ENCODE measurements at regions of chr6 and their contacts with region 1.

Region 1: DNA sequence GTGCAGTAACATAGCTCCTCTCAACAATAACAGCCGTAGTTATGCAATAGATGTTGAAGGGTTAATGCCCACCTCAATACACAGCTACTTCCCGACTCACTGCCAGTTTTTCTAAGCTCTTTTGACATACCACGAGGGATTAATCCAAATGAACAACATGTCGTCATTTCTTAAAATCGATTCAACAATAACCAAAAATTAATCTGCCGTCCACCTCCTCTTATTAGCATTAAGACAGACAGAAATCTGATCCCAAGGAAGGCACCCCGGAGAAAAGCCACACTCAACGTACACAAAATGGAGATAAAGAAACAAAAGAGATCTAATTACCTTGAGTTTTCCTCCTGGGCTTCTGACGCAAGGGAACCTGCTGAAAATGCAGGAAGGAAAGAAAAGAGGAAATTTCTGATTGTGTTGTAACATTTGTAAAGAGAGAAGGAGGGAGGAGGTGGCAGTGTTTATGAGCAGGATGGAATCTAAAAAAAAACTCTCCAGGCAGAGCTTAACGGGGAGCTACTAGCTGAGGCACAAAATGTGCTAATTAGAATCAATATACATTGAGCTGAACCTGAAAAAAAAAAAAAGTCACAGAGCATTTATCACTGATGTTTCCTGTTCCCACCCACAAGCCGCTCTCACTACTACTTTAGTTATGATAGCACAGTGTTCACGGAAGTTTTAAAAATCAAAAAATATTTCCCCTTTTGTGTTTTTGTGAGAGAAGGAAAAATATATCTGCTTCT is 109.3 kb downstream of the IPCEF1 start:
- DNase-seq: no peak
- ATAC-seq: peak; percentile 59
- H3K4me3 ChIP-seq: peak overlapping the region; percentile 76
- H3K27ac ChIP-seq: peak overlapping the region; percentile 86
- H3K4me1 ChIP-seq: peaks cover 26% of the 10 kb centered on the region
- H3K27me3 ChIP-seq: no peaks in the 10 kb centered on the region
- CTCF ChIP-seq: no peak
- EP300 ChIP-seq: peak; percentile 60 to 73
- POLR2A ChIP-seq: no peak
- RAD21 ChIP-seq: no peak

Region 2: DNA sequence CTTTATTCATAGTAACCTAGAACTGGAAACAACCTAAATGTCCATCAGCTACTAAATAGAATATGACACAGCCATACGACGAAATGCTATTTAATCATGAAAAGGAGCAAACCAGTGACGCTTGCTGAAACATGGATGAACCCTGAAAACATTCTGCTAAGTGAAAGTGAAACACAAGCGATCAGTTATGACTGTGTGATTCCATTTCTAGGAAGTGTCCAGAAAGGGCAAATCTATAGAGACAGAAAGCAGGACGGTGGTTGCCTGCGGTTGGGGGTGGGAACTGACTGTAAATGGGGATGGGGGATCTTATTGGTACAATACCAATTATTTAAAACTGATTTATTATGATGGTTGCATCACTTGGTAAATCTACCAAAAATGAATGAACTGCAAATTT is 17.5 kb before region 1 on chr6:
- CTCF ChIA-PET with region 1: interaction called, 17 read pairs
- POLR2A ChIA-PET with region 1: interaction called, 17 read pairs
- RAD21 ChIA-PET with region 1: interaction called, 51 read pairs
- SMC1A ChIA-PET with region 1: interaction called, 152 read pairs
- in situ Hi-C with region 1: no loop called
- intact Hi-C with region 1: loop called (anchors 1 kb)
- DNase-seq: no peak
- ATAC-seq: peak; percentile 82
- H3K4me3 ChIP-seq: 0 out of 2 replicates have a peak overlapping the region, but pooled peaks have one; percentile 4
- H3K27ac ChIP-seq: peak overlapping the region; percentile 35; the same call in 1 of the 2 replicates
- H3K4me1 ChIP-seq: peaks cover 9% of the 10 kb centered on the region
- H3K27me3 ChIP-seq: no peaks in the 10 kb centered on the region
- CTCF ChIP-seq: no peak
- EP300 ChIP-seq: peak in 1 of 2 experiments; percentile 63; a peak in 1 of 4 replicates
- POLR2A ChIP-seq: no peak
- RAD21 ChIP-seq: no peak

Region 3: GRCh38 chr6:154258064-154258757 is 10.9 kb after region 1 on chr6:
- CTCF ChIA-PET with region 1: interaction called, 13 read pairs
- POLR2A ChIA-PET with region 1: interaction called, 17 read pairs
- RAD21 ChIA-PET with region 1: interaction called, 30 read pairs
- SMC1A ChIA-PET with region 1: interaction called, 86 read pairs
- in situ Hi-C with region 1: no loop called
- intact Hi-C with region 1: no loop called
- DNase-seq: no peak
- ATAC-seq: peak; percentile 77
- H3K4me3 ChIP-seq: no peak overlapping the region
- H3K27ac ChIP-seq: peak overlapping the region; percentile 61
- H3K4me1 ChIP-seq: peaks cover 41% of the 10 kb centered on the region
- H3K27me3 ChIP-seq: no peaks in the 10 kb centered on the region
- CTCF ChIP-seq: no peak
- EP300 ChIP-seq: peak in 1 of 2 experiments; percentile 79; a peak in 3 of 4 replicates
- POLR2A ChIP-seq: no peak
- RAD21 ChIP-seq: no peak

Region 4: DNA sequence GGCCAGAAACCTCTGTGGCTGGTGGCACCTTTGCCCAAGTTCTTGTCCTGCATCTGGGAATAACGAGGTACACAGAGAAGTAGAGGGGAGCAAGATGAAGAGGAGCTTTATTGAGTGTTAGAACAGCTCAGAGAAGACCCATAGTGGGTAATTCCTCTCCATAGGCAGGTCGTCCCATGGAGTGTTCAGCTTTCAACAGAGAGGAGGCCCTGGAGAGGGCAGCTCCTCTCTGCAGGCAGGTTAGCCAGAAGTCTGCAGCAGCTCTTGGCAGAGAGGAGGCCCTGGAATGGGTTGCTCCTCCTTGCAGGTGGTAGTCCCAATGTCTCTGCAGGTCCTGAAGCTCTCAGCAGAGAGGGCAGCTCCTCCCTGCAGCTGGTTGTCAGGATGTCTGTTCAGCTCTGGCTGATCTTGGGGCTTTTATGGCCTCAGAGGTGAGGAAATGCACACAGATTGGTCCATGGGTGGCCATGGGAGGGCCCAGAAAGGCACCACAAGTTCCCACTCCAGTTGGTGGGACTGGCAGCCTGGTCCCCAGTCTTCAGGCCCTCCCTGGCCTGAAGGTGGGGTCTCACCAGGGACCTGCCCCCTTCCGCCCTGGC is 20.3 kb after region 1 on chr6:
- CTCF ChIA-PET with region 1: interaction called, 90 read pairs
- POLR2A ChIA-PET with region 1: interaction called, 4 read pairs
- RAD21 ChIA-PET with region 1: interaction called, 15 read pairs
- SMC1A ChIA-PET with region 1: interaction called, 86 read pairs
- in situ Hi-C with region 1: no loop called
- intact Hi-C with region 1: no loop called
- DNase-seq: no peak
- ATAC-seq: peak; percentile 47
- H3K4me3 ChIP-seq: no peak overlapping the region
- H3K27ac ChIP-seq: no peak overlapping the region
- H3K4me1 ChIP-seq: no peaks in the 10 kb centered on the region
- H3K27me3 ChIP-seq: no peaks in the 10 kb centered on the region
- CTCF ChIP-seq: no peak
- EP300 ChIP-seq: no peak
- POLR2A ChIP-seq: no peak
- RAD21 ChIP-seq: no peak

Region 5: GRCh38 chr6:154352898-154353585 is 105.8 kb after region 1 on chr6:
- CTCF ChIA-PET with region 1: no interaction called
- POLR2A ChIA-PET with region 1: no interaction called
- RAD21 ChIA-PET with region 1: interaction called, 4 read pairs
- SMC1A ChIA-PET with region 1: interaction called, 5 read pairs
- in situ Hi-C with region 1: no loop called
- intact Hi-C with region 1: loop called (anchors 5 kb)
- DNase-seq: peak; percentile 84
- ATAC-seq: peak; percentile 77
- H3K4me3 ChIP-seq: no peak overlapping the region; the same call in 1 of the 2 replicates
- H3K27ac ChIP-seq: no peak overlapping the region
- H3K4me1 ChIP-seq: peaks cover 33% of the 10 kb centered on the region
- H3K27me3 ChIP-seq: no peaks in the 10 kb centered on the region
- CTCF ChIP-seq: no peak
- EP300 ChIP-seq: peak; percentile 87 to 92
- POLR2A ChIP-seq: no peak
- RAD21 ChIP-seq: 0 out of 2 replicates have a peak, but pooled peaks have one; percentile 4

Region 6: GRCh38 chr6:154606457-154606856 is 359.2 kb after region 1 on chr6:
- CTCF ChIA-PET with region 1: no interaction called
- POLR2A ChIA-PET with region 1: no interaction called
- RAD21 ChIA-PET with region 1: interaction called, 3 read pairs
- SMC1A ChIA-PET with region 1: interaction called, 13 read pairs
- in situ Hi-C with region 1: no loop called
- intact Hi-C with region 1: loop called (anchors 1 kb)
- DNase-seq: peak; percentile 93
- ATAC-seq: peak; percentile 82
- H3K4me3 ChIP-seq: no peak overlapping the region; the same call in 1 of the 2 replicates
- H3K27ac ChIP-seq: peak overlapping the region; percentile 73
- H3K4me1 ChIP-seq: peaks cover 31% of the 10 kb centered on the region
- H3K27me3 ChIP-seq: no peaks in the 10 kb centered on the region
- CTCF ChIP-seq: 0 out of 6 replicates have a peak, but pooled peaks of 1 of the 3 experiments have one; percentile 7
- EP300 ChIP-seq: peak; percentile 90 to 98; a peak in 3 of 4 replicates
- POLR2A ChIP-seq: peak; percentile 64
- RAD21 ChIP-seq: no peak; the same call in 1 of the 2 replicates